Activated CD4-positive, alpha-beta T cell treated with anti-CD3 and anti-CD28 coated beads, Interleukin-2, amount 10 ng/mL, durations not matched to agents 7 days and 5 days (primary cell): ENCODE measurements at regions of chrX and their contacts with region 1.

Region 1: DNA sequence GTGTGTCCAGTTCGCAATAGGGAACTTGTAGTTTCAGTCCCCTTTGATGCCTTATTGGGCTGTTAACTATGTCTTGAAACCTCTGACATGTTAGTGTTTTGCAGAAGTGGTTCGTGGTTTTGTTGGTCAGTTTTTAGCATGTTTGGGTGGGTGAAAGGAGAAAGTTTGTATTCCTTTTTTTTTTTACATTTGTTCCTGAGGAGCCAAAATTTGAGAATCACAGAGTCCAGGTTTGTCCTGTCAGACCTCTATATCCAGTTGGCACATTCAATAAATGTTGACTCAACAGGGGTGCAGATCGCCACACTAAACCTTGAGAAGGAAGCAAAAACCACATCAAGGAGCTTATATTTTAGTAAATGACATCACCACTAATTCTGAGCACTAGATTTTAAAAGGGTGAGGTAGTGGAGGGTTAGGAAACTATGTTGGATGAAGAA is 26.2 kb downstream of the DLG3 start:
- DNase-seq: no peak
- H3K4me3 Mint-ChIP-seq: no peak overlapping the region
- H3K27ac Mint-ChIP-seq: no peak overlapping the region
- H3K4me1 Mint-ChIP-seq: peaks cover 17% of the 10 kb centered on the region
- H3K27me3 Mint-ChIP-seq: no peaks in the 10 kb centered on the region

Region 2: DNA sequence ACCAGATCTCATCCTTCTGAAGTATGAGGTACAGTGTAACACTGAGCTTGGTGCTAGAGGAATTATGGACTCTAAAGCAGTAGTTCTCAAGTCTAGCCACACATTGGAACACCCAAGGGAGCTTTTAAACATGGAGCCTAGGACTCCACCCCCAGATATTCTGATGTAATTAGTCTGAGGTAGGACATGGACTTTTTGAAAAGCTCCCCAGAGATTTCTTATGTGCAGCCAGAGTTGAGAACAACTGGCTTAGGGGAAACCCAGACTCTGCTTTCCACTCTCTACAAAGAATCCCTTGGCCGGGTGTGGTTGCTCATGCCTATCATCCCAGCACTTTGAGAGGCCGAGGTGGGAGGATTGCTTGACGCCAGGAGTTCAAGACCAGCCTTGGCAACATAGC is 59.4 kb before region 1 on chrX:
- CTCF ChIA-PET with region 1: no interaction called
- POLR2A ChIA-PET with region 1: no interaction called
- DNase-seq: no peak
- H3K4me3 Mint-ChIP-seq: no peak overlapping the region
- H3K27ac Mint-ChIP-seq: no peak overlapping the region
- H3K4me1 Mint-ChIP-seq: no peaks in the 10 kb centered on the region
- H3K27me3 Mint-ChIP-seq: no peaks in the 10 kb centered on the region

Region 3: DNA sequence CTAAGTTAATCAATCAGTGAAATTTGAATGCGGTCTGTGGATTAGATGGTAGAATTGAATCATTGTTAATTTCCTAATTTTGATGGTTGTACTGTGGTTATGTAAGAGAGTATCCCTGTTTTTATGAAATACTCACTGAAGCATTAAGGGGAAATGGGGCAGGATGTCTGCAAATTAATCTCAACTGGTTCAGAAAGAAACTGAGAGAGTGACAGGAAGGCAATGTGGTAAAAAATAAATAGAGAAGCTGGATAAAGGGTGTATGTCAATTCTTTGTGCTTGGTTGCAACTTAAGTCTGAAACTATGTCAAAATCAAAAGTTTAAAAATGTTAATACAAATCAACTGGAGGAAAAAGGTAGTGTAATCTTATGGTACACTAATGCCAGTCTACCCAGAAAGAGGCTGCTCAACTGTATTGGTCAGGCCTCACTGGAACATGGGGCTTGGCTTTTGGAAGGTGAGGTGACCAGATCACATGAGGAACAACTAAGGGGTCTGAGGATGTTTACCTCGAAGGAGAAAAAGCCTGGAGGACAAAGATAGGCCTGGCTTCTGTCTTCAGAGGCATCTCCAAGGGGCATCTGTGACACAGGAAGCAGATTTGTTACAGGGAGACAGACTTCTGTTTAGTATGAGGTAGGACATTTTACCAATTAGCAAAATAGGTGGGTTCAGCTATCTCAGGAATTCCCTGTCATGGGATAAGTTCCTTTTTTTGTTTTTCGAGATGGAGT is 56.9 kb after region 1 on chrX:
- CTCF ChIA-PET with region 1: no interaction called
- POLR2A ChIA-PET with region 1: interaction called, 16 read pairs
- DNase-seq: no peak
- H3K4me3 Mint-ChIP-seq: no peak overlapping the region
- H3K27ac Mint-ChIP-seq: peak overlapping the region; percentile 1
- H3K4me1 Mint-ChIP-seq: peaks cover 14% of the 10 kb centered on the region
- H3K27me3 Mint-ChIP-seq: no peaks in the 10 kb centered on the region